ENCODE measurements at regions of chr12 and their contacts with region 1.

Region 1: GRCh38 chr12:19744734-19745218 is 305.5 kb downstream of the AEBP2 start:
- DNase-seq: peak; percentile 99
- H3K4me3 ChIP-seq: no peak overlapping the region
- H3K27ac ChIP-seq: peak overlapping the region; percentile 96
- H3K4me1 ChIP-seq: peaks cover 22% of the 10 kb centered on the region
- H3K27me3 ChIP-seq: no peaks in the 10 kb centered on the region
- CTCF ChIP-seq: no peak
- POLR2A ChIP-seq: peak; percentile 66

Region 2: GRCh38 chr12:19529951-19530635 is 214.7 kb before region 1 on chr12:
- CTCF ChIA-PET with region 1: no interaction called
- POLR2A ChIA-PET with region 1: no interaction called
- dilution Hi-C with region 1: no loop called
- intact Hi-C with region 1: loop called (anchors 5 kb)
- DNase-seq: peak; percentile 82
- H3K4me3 ChIP-seq: peak overlapping the region in 1 of 3 experiments; percentile 17
- H3K27ac ChIP-seq: peak overlapping the region; percentile 84
- H3K4me1 ChIP-seq: peaks cover 36% of the 10 kb centered on the region
- H3K27me3 ChIP-seq: no peaks in the 10 kb centered on the region
- CTCF ChIP-seq: no peak
- POLR2A ChIP-seq: peak; percentile 50

Region 3: GRCh38 chr12:19694627-19695026 is 50.1 kb before region 1 on chr12:
- CTCF ChIA-PET with region 1: interaction called, 6 read pairs
- POLR2A ChIA-PET with region 1: no interaction called
- dilution Hi-C with region 1: no loop called
- intact Hi-C with region 1: loop called (anchors 1 kb)
- DNase-seq: no peak
- H3K4me3 ChIP-seq: no peak overlapping the region
- H3K27ac ChIP-seq: peak overlapping the region; percentile 58
- H3K4me1 ChIP-seq: peaks cover 20% of the 10 kb centered on the region
- H3K27me3 ChIP-seq: no peaks in the 10 kb centered on the region
- CTCF ChIP-seq: no peak
- POLR2A ChIP-seq: no peak

Region 4: GRCh38 chr12:19764408-19764807 is 19.6 kb after region 1 on chr12:
- CTCF ChIA-PET with region 1: no interaction called
- POLR2A ChIA-PET with region 1: no interaction called
- dilution Hi-C with region 1: no loop called
- intact Hi-C with region 1: no loop called
- DNase-seq: peak; percentile 57
- H3K4me3 ChIP-seq: no peak overlapping the region
- H3K27ac ChIP-seq: no peak overlapping the region
- H3K4me1 ChIP-seq: peaks cover 2% of the 10 kb centered on the region
- H3K27me3 ChIP-seq: no peaks in the 10 kb centered on the region
- CTCF ChIP-seq: no peak
- POLR2A ChIP-seq: no peak

Region 5: GRCh38 chr12:19959353-19959752 is 214.6 kb after region 1 on chr12:
- CTCF ChIA-PET with region 1: no interaction called
- POLR2A ChIA-PET with region 1: no interaction called
- dilution Hi-C with region 1: no loop called
- intact Hi-C with region 1: loop called (anchors 1 kb)
- DNase-seq: peak; percentile 79
- H3K4me3 ChIP-seq: peak overlapping the region in 1 of 3 experiments; percentile 43
- H3K27ac ChIP-seq: peak overlapping the region; percentile 86
- H3K4me1 ChIP-seq: peaks cover 49% of the 10 kb centered on the region
- H3K27me3 ChIP-seq: no peaks in the 10 kb centered on the region
- CTCF ChIP-seq: no peak
- POLR2A ChIP-seq: no peak

Region 6: GRCh38 chr12:20030826-20031225 is 286.1 kb after region 1 on chr12:
- CTCF ChIA-PET with region 1: no interaction called
- POLR2A ChIA-PET with region 1: no interaction called
- dilution Hi-C with region 1: no loop called
- intact Hi-C with region 1: loop called (anchors 2 kb)
- DNase-seq: peak; percentile 96
- H3K4me3 ChIP-seq: no peak overlapping the region
- H3K27ac ChIP-seq: peak overlapping the region; percentile 91
- H3K4me1 ChIP-seq: peaks cover 31% of the 10 kb centered on the region
- H3K27me3 ChIP-seq: no peaks in the 10 kb centered on the region
- CTCF ChIP-seq: no peak
- POLR2A ChIP-seq: peak; percentile 56

Region 7: DNA sequence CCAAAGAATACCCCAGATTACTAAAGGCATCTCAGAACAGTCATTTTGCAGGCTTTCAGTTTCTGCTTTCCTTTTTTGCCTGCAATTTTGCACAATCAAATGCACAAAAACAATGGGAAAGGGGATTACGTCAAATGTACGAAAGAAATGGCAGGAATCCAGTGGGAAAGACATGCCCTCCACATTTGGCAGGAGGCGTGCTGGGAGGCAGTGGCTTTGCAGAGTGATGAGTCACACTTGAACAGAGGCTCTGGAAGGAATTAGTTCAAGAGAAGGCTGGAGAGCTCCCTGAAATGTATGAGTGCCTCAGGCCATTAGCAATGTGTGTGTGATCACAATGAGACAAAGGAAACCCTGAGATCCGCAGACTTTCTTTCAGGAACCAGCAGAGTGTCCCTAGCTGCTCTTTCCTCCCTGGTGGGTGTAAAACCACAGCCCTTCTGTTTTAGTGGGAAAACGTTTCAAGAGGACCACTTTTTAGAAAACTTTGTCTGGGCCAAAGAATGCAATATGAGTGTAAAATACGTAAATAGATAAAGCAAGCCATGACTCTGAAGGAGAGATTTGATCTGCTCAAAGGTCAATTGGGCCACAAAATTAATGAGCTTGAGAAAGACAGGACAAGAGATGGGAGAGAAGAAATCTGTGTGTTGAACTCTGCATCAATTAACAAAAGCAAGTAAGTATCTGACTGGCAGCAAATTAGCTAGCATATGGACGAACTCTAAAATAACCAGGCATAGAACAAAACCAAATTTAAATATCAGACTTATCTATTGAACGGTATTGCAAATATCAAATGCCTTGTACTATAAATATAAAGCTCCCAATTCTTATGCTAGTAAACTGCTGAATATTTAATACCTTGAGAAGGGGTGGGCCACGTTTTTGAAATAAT is 468.1 kb after region 1 on chr12:
- CTCF ChIA-PET with region 1: interaction called, 6 read pairs
- POLR2A ChIA-PET with region 1: no interaction called
- dilution Hi-C with region 1: no loop called
- intact Hi-C with region 1: loop called (anchors 1 kb)
- DNase-seq: peak; percentile 99
- H3K4me3 ChIP-seq: peak overlapping the region in 1 of 3 experiments; percentile 15
- H3K27ac ChIP-seq: peak overlapping the region; percentile 77
- H3K4me1 ChIP-seq: peaks cover 12% of the 10 kb centered on the region
- H3K27me3 ChIP-seq: no peaks in the 10 kb centered on the region
- CTCF ChIP-seq: no peak
- POLR2A ChIP-seq: no peak